B cell (primary cell): ENCODE measurements at regions of chr10 and their contacts with region 1.

Region 1: GRCh38 chr10:32005050-32005449 is 51.2 kb downstream of the KIF5B start:
- DNase-seq: peak; percentile 57
- ATAC-seq: peak; percentile 57
- H3K4me3 ChIP-seq: no peak overlapping the region
- H3K4me3 Mint-ChIP-seq: no peak overlapping the region
- H3K27ac ChIP-seq: no peak overlapping the region
- H3K27ac Mint-ChIP-seq: peak overlapping the region; percentile 43
- H3K4me1 ChIP-seq: no peaks in the 10 kb centered on the region
- H3K4me1 Mint-ChIP-seq: peaks cover 3% of the 10 kb centered on the region
- H3K27me3 ChIP-seq: no peaks in the 10 kb centered on the region
- H3K27me3 Mint-ChIP-seq: no peaks in the 10 kb centered on the region
- CTCF ChIP-seq: peak; percentile 63

Region 2: DNA sequence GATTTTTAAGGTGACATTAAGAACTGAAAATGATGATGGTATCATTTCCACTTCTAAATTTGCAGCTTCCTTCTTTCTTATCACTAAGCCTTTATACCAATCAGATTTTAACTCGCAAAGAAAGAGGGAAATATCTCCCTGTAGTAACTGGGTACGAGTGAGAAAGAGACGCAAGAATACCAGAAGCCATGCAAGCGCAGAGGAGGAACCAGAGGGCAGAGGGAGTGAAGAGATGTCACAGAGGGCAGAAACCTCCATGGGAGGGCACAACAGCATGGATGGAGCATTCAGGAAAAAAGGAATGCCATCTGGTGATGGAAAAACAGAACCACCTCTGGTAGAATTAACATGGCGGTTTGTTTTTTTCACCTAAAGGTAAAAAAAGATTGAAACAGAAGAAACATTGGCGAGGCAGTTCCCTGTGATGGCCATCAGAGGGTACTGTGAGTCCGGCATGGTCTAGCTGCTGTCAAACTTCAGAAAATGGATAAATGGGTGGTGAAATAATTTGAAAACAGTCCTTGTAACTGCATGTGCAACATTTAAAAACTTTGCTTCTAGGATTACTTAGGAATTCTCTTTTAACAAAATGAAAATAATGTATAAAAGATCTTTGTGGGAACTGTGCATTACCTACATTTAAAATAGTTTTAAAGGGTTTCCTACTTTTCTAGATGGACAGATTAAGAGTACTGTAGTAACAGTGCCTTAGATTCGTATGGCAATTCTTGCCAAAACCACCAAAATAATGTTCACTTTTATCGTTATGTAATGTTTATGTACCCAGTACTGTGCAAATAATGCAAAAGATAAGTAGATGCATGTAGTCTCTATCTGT is 168.3 kb before region 1 on chr10:
- CTCF ChIA-PET with region 1: interaction called, 4 read pairs
- POLR2A ChIA-PET with region 1: no interaction called
- intact Hi-C with region 1: loop called (anchors 10 kb)
- DNase-seq: peak; percentile 20
- ATAC-seq: peak; percentile 45
- H3K4me3 ChIP-seq: no peak overlapping the region
- H3K4me3 Mint-ChIP-seq: peak overlapping the region; percentile 36
- H3K27ac ChIP-seq: no peak overlapping the region
- H3K27ac Mint-ChIP-seq: no peak overlapping the region
- H3K4me1 ChIP-seq: no peaks in the 10 kb centered on the region
- H3K4me1 Mint-ChIP-seq: peaks cover 9% of the 10 kb centered on the region
- H3K27me3 ChIP-seq: no peaks in the 10 kb centered on the region
- H3K27me3 Mint-ChIP-seq: no peaks in the 10 kb centered on the region
- CTCF ChIP-seq: peak; percentile 65

Region 3: DNA sequence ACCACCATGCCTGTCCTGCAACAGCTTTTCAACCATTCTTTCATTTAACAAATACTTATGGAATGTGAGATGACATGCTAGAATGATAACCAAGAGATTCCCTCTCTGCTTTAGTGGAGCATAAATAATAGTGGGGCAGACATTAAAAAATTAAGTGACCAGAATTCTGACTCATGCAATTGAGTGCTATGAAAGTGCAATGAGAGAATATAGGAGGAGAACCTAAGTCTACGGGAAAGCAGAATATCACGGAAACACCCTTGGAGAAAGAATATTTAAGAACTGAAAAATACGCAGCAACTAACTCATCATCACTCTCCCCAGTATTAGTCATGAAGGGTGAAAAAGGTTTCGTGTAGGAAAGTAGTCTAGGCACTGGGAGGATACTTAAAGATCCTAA is 44.1 kb after region 1 on chr10:
- CTCF ChIA-PET with region 1: no interaction called
- POLR2A ChIA-PET with region 1: no interaction called
- intact Hi-C with region 1: loop called (anchors 5 kb)
- DNase-seq: no peak
- ATAC-seq: no peak
- H3K4me3 ChIP-seq: no peak overlapping the region
- H3K4me3 Mint-ChIP-seq: peak overlapping the region; percentile 3
- H3K27ac ChIP-seq: no peak overlapping the region
- H3K27ac Mint-ChIP-seq: peak overlapping the region; percentile 5
- H3K4me1 ChIP-seq: peaks cover 22 to 44% of the 10 kb centered on the region in 2 donors
- H3K4me1 Mint-ChIP-seq: peaks cover 70% of the 10 kb centered on the region
- H3K27me3 ChIP-seq: no peaks in the 10 kb centered on the region
- H3K27me3 Mint-ChIP-seq: no peaks in the 10 kb centered on the region
- CTCF ChIP-seq: no peak